Calu3 (cell line): ENCODE measurements at regions of chr3 and their contacts with region 1.

Region 1: DNA sequence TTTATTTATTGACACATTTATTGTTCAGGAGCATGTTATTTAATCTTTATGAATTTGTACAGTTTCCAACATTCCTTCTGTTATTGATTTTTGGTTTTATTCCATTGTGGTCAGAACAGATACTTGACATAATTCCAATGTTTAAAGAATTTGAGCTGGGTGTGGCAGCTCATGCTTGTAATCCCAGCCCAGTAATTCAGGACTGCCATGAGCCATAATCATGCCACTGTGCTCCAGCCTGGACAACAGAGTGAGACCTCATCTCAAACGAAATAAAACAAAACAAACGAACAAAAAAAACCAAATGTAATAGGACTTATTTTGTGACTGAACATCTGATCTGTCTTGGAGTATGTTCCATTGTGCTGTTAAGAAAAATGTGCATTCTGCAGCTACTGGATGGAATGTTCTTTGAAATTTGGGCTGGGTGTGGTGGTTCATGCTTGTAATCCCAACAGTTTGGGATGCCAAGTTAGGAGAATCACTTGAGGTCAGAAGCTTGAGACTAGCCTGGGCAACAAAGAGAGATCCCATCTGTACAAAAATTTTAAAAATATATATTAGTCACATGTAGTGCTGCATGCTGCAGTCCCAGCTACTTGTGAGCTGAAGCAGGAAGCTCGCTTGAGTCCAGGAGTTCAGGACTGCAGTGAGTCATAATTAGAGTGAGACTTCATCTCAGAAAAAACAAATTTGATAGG is 62.7 kb upstream of the PLSCR4 start:
- DNase-seq: peak; percentile 64
- H3K4me3 Mint-ChIP-seq: peak overlapping the region; percentile 15
- H3K27ac Mint-ChIP-seq: peak overlapping the region; percentile 11
- H3K4me1 Mint-ChIP-seq: peaks cover 54% of the 10 kb centered on the region
- H3K27me3 Mint-ChIP-seq: no peaks in the 10 kb centered on the region
- CTCF ChIP-seq: no peak

Region 2: DNA sequence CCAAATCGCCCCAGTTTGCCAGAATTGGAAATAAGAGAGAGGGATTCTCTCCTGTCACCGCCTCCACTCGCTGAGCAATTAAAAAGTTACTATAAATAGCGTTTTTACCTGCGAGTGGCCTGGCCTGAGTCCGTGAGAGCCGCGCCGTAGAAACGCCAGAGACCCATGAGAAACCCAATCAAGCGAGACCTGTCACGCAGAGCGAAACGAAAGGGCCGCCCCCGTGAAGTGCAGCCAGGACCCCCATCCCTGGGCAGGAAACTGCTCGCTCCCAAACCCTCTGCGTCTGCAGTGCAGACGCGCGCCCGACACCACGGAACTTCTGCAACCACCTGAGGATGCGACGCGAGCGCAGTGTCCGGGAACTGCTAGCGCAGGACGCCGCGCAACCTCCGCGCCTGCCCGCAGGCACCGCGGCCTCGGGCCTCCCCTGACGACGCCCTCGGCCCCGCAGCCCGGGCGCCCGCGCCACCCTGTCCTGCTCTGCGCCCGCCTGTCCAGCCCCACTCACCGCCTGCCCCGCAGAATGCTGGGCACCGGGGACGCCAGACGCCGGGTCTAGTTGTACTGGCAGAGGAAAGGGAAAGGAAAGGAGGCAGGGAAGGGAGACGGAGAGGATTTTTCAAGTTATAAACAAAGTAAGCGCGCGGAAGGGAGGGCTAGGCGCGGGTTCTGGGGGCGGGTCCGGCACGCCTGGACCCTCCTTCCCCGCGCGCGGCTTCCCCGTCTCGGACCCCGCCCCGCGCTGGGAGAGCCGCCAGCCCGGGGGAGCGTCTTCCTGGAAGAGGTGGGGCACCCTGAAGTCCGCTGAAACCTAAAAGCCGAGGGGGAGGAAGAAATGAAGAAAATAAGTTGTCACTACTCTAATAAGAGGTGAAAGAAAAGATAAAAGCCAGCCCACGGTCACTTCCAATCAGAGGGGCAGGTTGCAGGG is 62.8 kb before region 1 on chr3 and contains the start of gene PLSCR4:
- CTCF ChIA-PET with region 1: interaction called, 3 read pairs
- intact Hi-C with region 1: loop called (anchors 2 kb)
- DNase-seq: peak; percentile 77
- H3K4me3 Mint-ChIP-seq: peak within 1 kb of the TSS; percentile 91
- H3K27ac Mint-ChIP-seq: peak within 1 kb of the TSS; percentile 73
- H3K4me1 Mint-ChIP-seq: no peaks in the 10 kb centered on the region
- H3K27me3 Mint-ChIP-seq: no peaks in the 10 kb centered on the region
- CTCF ChIP-seq: no peak
- total RNA-seq, gene PLSCR4: 6.3 and 10.2 TPM in 2 replicates

Region 3: DNA sequence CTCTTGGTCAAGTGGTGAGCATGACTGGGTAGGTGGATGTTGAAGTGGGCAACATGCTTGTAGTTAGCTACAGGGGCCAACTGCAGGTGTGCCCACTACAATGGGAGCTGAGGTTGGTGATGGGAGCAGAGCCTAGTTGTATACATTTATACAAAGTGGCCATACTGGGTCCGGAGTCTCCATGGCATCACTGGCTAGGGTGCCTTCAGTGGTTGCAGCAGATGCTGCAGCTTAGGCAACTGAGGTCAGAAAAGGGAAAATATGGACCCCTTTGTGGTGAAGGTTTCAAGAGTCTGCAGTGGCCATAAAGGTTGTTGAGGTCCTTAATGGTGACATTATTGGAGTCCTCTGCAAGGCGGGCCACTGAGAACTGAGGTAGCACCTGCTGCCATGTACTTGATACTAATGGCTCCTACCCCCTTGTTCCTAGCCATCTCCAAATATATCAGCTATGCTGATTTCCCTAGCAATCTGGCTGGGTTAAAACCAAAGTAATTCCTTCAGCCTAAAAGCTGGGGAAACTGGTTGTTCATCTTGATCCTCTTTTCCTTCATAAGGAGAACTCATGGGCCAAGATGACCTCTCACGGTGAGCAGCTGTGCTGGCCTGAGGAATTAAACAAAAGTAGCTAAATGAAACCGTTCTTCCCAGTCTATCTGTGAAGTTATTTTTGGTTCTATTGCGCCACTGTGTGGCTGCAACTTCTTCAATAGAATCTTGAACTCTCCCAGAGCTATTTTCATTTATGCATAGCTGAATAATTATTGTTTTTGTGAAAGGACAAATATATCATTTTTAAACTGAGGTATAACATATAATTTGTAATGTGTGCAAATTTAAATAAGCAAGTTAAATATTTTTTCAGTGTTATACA is 13.3 kb after region 1 on chr3:
- CTCF ChIA-PET with region 1: interaction called, 29 read pairs
- intact Hi-C with region 1: no loop called
- DNase-seq: peak; percentile 55
- H3K4me3 Mint-ChIP-seq: no peak overlapping the region
- H3K27ac Mint-ChIP-seq: no peak overlapping the region
- H3K4me1 Mint-ChIP-seq: no peaks in the 10 kb centered on the region
- H3K27me3 Mint-ChIP-seq: no peaks in the 10 kb centered on the region
- CTCF ChIP-seq: peak; percentile 60